ENCODE measurements at regions of chr1 and their contacts with region 1.

Region 1: GRCh38 chr1:207848234-207848633 is 62.7 kb downstream of the CD34 start:
- H3K4me3 Mint-ChIP-seq: no peak overlapping the region
- H3K27ac Mint-ChIP-seq: peak overlapping the region; percentile 79
- H3K4me1 Mint-ChIP-seq: peaks cover 81% of the 10 kb centered on the region
- H3K27me3 Mint-ChIP-seq: no peaks in the 10 kb centered on the region

Region 2: GRCh38 chr1:207868774-207869721 is 20.8 kb after region 1 on chr1:
- intact Hi-C with region 1: loop called (anchors 2 kb)
- H3K4me3 Mint-ChIP-seq: peak overlapping the region; percentile 91
- H3K27ac Mint-ChIP-seq: peak overlapping the region; percentile 83
- H3K4me1 Mint-ChIP-seq: peaks cover 88% of the 10 kb centered on the region
- H3K27me3 Mint-ChIP-seq: no peaks in the 10 kb centered on the region

Measured in dendritic cell treated with granulocyte-macrophage colony-stimulating factor and Interleukin-4, amounts not matched to agents 40 ng/mL and 50 ng/mL, for 4 days (primary cell).